Activated naive CD8-positive, alpha-beta T cell treated with anti-CD3 and anti-CD28 coated beads, Interleukin-2, amount 10 ng/mL, durations not matched to agents 7 days and 5 days (primary cell): ENCODE measurements at regions of chr1 and their contacts with region 1.

Region 1: DNA sequence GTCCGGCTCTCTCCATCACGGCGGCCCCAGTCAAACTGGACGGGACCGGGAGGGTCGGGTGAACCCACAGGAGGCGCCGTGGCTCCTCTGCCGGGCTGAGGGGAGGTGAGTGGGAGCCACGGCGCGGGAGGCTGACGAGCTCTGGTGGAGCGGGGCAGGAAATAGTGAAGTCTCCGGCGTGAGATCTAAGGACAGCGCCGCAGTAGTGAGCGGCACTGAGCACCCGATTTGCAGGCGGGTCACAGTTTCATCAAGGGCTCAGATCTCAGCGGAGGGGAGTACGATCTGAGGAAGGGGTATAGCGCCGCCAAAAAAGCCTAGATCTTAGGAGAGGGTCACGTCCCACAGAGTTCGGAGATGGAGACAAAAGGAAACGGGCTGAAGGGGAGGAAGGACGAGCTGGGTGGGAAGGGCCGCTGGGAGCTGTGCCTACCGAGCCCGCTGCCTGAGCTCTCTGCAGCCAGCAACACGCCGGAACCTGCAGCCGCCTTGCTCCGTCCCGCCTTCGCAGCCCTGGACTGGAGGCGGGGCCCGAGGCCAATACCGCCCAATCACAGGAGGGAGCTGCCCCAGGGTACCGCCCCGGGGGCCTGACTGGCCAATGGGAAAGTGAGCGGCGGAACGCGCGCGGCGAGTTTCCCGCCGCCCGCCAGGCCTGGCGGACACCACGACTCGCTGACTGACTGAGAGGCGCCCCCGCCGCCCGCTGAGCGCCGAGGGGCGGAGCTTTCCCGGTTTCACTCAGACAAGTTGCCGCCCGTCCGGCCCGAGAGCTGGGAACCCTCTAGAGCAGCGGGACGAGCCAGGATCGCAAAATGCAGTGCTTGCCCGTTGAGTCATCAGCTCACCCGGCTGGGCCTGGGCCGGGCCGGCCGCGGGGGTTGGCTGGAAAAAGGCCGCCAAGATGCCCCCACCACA is 1.9 kb downstream of the SFN start:
- DNase-seq: peak; percentile 97
- ATAC-seq: peak; percentile 93
- H3K4me3 Mint-ChIP-seq: peak overlapping the region; percentile 96
- H3K27ac Mint-ChIP-seq: peak overlapping the region; percentile 95
- H3K4me1 Mint-ChIP-seq: peaks cover 14% of the 10 kb centered on the region
- H3K27me3 Mint-ChIP-seq: no peaks in the 10 kb centered on the region

Region 2: GRCh38 chr1:26695356-26696118 is 169.3 kb before region 1 on chr1 and contains the start of gene ARID1A:
- POLR2A ChIA-PET with region 1: interaction called, 18 read pairs
- DNase-seq: peak; percentile 98
- ATAC-seq: peak; percentile 64
- H3K4me3 Mint-ChIP-seq: peak within 1 kb of the TSS; percentile 90
- H3K27ac Mint-ChIP-seq: peak within 1 kb of the TSS; percentile 97
- H3K4me1 Mint-ChIP-seq: peaks cover 20% of the 10 kb centered on the region
- H3K27me3 Mint-ChIP-seq: no peaks in the 10 kb centered on the region
- total RNA-seq, gene ARID1A: 118 to 124 TPM

Region 3: GRCh38 chr1:26820784-26821269 is 44.0 kb before region 1 on chr1:
- POLR2A ChIA-PET with region 1: interaction called, 23 read pairs
- DNase-seq: no peak
- ATAC-seq: peak; percentile 97
- H3K4me3 Mint-ChIP-seq: peak overlapping the region; percentile 79
- H3K27ac Mint-ChIP-seq: peak overlapping the region; percentile 72
- H3K4me1 Mint-ChIP-seq: peaks cover 19% of the 10 kb centered on the region
- H3K27me3 Mint-ChIP-seq: no peaks in the 10 kb centered on the region

Region 4: GRCh38 chr1:26848947-26849774 is 15.7 kb before region 1 on chr1:
- POLR2A ChIA-PET with region 1: interaction called, 12 read pairs
- DNase-seq: no peak
- ATAC-seq: no peak
- H3K4me3 Mint-ChIP-seq: no peak overlapping the region
- H3K27ac Mint-ChIP-seq: no peak overlapping the region
- H3K4me1 Mint-ChIP-seq: peaks cover 1% of the 10 kb centered on the region
- H3K27me3 Mint-ChIP-seq: no peaks in the 10 kb centered on the region

Region 5: GRCh38 chr1:26889551-26890466 is 24.9 kb after region 1 on chr1 and contains the start of gene GPN2:
- POLR2A ChIA-PET with region 1: interaction called, 34 read pairs
- DNase-seq: peak; percentile 81
- ATAC-seq: peak; percentile 95
- H3K4me3 Mint-ChIP-seq: peak within 1 kb of the TSS; percentile 96
- H3K27ac Mint-ChIP-seq: peak within 1 kb of the TSS; percentile 92
- H3K4me1 Mint-ChIP-seq: peaks cover 27% of the 10 kb centered on the region
- H3K27me3 Mint-ChIP-seq: no peaks in the 10 kb centered on the region
- total RNA-seq, gene GPN2: 30.1 to 31.2 TPM